Adrenal gland (tissue), 19 donors: ENCODE measurements at regions of chr6 and their contacts with region 1.

Region 1: GRCh38 chr6:34696739-34697543 is at the start of gene ILRUN:
- DNase-seq: peak; percentile 95 to 98 (median 97)
- H3K4me3 ChIP-seq: peak within 1 kb of the TSS; percentile 55 to 86 (median 82)
- H3K27ac ChIP-seq: peak within 1 kb of the TSS; percentile 73 to 99 (median 94)
- H3K4me1 ChIP-seq: peaks cover 18 to 32% of the 10 kb centered on the region in 2 donors
- H3K27me3 ChIP-seq: no peaks in the 10 kb centered on the region
- CTCF ChIP-seq: no peak
- POLR2A ChIP-seq: peak; percentile 37 to 60
- total RNA-seq, gene ILRUN: 35.0 to 84.1 (median 70.9) TPM

Region 2: GRCh38 chr6:34742094-34742493 is 45.2 kb after region 1 on chr6:
- intact Hi-C with region 1: no loop called
- DNase-seq: no peak
- H3K4me3 ChIP-seq: no peak overlapping the region
- H3K27ac ChIP-seq: no peak overlapping the region
- H3K4me1 ChIP-seq: peaks cover 0 to 6% of the 10 kb centered on the region in 2 donors
- H3K27me3 ChIP-seq: no peaks in the 10 kb centered on the region
- CTCF ChIP-seq: no peak
- POLR2A ChIP-seq: no peak

Region 3: GRCh38 chr6:34757687-34758274 is 60.8 kb after region 1 on chr6:
- intact Hi-C with region 1: loop called in 1 of 2 experiments (anchors 10 kb)
- DNase-seq: no peak
- H3K4me3 ChIP-seq: peak overlapping the region; percentile 36 to 92 (median 71)
- H3K27ac ChIP-seq: peak overlapping the region; percentile 88 to 95 (median 91)
- H3K4me1 ChIP-seq: peaks cover 9 to 19% of the 10 kb centered on the region in 2 donors
- H3K27me3 ChIP-seq: no peaks in the 10 kb centered on the region
- CTCF ChIP-seq: no peak
- POLR2A ChIP-seq: no peak